Right lobe of liver (tissue), 6 donors: ENCODE measurements at regions of chr6 and their contacts with region 1.

Region 1: DNA sequence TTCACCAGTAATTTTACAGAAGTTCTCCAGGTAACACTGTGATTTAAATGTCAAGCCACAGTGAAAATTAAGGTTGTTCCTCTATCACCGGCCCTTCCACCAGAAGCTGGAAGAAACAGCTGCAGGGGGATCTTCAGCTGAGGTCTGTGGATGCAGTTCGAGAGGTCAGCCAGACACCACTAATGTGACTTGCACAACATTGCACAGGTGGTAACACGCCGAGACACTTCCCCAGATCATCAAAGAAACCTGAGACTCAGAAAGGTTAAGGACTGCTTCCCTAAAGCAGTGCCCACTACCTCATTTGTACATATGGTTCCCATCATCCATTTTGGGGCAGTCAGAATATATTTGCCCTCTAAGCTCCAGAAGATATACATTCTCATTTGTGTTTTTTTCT is 8.1 kb upstream of the SERPINB9 start:
- DNase-seq: no peak
- ATAC-seq: no peak
- H3K4me3 ChIP-seq: no peak overlapping the region
- H3K27ac ChIP-seq: no peak overlapping the region
- H3K4me1 ChIP-seq: no peaks in the 10 kb centered on the region
- H3K27me3 ChIP-seq: no peaks in the 10 kb centered on the region
- CTCF ChIP-seq: no peak
- POLR2A ChIP-seq: no peak

Region 2: DNA sequence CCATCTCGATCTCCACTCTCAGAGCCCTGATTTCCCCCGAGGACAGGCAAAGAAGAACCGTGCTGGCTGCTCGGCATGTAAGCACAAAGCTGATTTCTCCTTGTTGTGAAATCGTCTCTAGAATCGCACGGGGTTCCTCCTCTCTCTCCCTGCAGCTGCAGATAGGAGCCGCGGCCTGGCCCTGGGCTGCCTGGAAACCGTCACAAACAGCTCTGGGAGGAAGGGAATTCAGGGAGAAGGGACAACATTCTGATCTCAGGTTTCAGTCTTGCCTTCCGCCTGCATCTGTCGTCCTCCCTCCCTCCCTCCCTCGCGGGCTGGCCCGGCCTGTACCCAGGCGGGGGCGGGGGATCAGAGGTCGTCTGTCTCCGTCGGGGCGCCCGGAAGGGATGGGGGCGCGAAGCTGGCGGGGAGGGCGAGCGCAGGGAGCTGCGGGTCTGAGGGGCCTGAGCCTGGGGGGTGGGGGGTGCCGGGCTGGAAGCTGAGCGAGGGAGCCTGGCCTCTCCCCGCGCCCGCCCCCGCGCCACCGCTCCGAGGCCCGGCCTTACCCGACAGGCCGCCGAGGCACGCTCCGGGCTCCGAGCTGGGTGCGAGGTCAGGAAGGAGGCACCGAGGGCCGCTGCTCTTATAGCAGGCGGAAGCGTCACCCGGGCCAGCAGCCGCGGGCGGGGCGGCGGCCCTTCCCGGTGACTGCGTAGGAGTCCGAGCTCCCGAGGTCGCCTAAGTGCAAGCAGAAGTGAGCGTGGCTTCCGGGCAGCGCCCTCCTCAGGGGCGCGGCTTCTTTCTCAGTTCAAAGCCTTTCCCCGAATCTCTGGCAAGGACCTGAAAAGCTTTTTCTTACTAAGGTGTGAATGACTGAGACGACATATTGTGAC is 69.7 kb before region 1 on chr6 and contains the start of gene SERPINB1:
- intact Hi-C with region 1: loop called (anchors 10 kb)
- DNase-seq: peak; percentile 88 to 94 (median 94)
- ATAC-seq: peak; percentile 82 to 90 (median 88)
- H3K4me3 ChIP-seq: peak within 1 kb of the TSS; percentile 60 to 71 (median 60)
- H3K27ac ChIP-seq: peak within 1 kb of the TSS; percentile 83 to 94 (median 89)
- H3K4me1 ChIP-seq: peaks cover 0 to 23% (median 3%) of the 10 kb centered on the region in 4 donors
- H3K27me3 ChIP-seq: no peaks in the 10 kb centered on the region
- CTCF ChIP-seq: peak in 2 of 4 donors; percentile 15 to 22
- POLR2A ChIP-seq: peak; percentile 77
- total RNA-seq, gene SERPINB1: 7.2 to 44.6 (median 25.2) TPM